Lower leg skin (tissue), 4 donors: ENCODE measurements at regions of chr9 and their contacts with region 1.

Region 1: DNA sequence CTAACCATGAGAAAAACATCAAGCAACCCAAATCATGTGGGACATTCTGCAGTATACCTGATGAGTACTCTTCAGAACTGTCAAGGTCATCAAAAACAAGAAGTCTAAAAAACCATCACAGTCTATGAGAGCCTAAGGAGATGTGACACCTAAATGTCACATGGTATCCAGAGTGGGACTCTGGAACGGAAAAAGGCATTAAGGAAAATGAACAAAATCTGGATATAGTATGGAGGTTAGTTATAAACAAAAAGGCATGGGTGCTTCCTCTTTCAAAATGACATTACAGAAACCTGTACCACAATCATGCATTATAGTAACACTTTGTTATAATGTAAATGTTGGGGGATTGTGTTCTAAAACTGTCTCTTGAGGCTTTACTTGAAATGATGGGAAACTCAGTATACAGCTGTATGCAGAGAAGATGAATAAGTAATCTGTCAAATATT is 47.4 kb downstream of the PRKACG start:
- DNase-seq: no peak
- H3K4me3 ChIP-seq: no peak overlapping the region
- CTCF ChIP-seq: no peak
- POLR2A ChIP-seq: no peak

Region 2: GRCh38 chr9:68643901-68644809 is 322.4 kb before region 1 on chr9:
- intact Hi-C with region 1: no loop called
- DNase-seq: no peak
- H3K4me3 ChIP-seq: no peak overlapping the region
- CTCF ChIP-seq: no peak
- POLR2A ChIP-seq: no peak

Region 3: DNA sequence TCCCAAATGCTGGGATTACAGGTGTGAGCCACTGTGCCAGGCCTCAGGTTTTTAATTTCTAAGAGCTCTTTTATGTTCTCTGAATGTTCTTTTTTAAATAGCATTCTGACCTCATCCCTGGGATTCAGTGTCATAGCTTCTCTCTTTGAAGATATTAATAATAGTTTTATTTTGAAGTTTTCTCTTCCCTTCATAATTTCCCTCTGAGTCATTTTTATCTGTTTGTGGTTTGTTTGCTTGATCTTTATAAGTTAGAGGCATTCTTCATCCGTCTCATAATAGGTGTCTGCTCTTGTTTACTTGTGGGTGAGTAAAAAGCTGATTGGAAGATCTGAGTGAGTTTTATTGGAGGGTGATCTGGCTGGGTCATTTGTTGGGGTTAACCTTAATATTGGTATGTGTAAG is 1064.6 kb after region 1 on chr9:
- intact Hi-C with region 1: loop called (anchors 5 kb)
- DNase-seq: no peak
- H3K4me3 ChIP-seq: no peak overlapping the region
- CTCF ChIP-seq: no peak
- POLR2A ChIP-seq: no peak